ENCODE measurements at regions of chr12 and their contacts with region 1.

Region 1: GRCh38 chr12:48814262-48815125 is 3.8 kb upstream of the CACNB3 start:
- DNase-seq: no peak
- H3K4me3 ChIP-seq: peak overlapping the region; percentile 83
- CTCF ChIP-seq: peak; percentile 99

Region 2: DNA sequence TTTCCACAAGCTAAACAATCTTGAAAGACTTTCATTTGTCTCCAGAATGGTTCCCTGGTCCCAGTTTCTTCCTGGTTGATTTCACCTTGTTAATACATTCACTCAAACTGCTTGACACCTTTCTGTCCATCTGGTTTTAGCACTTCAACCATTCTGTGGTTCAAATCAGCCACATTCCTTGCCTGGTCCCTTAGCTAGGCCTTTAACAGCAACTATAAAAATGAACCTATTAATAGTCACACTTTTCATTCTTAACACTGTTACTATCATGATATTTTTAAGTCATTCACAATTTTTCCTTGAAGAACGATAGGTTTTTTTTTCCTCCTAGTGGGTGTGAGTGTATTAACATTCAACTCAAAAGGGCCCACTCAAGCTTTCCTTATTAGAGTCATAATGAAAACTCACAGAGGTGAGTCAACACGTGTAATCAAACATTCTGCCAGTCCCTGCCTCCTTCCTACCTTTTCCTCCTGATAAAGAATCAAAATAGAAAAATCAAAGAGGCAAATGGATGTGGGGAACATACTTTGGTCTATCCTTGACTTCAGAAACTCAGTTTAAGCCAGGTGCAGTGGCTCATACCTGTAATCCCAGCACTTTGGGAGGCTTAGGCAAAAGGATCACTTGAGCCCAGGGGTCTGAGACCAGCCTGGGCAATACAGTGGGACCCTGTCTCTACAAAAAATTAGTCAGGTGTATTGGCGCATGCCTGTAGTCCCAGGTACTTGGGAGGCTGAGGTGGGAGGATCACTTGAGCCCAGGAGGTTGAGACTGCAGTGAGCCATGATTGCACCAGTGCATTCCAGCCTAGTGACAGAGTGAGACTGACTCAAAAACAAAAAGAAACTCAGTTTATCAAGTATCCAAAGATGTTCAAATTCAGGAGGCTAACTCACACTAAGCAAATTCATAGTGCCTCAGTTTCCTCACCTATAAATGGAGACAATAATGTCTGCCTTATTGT is 63.4 kb before region 1 on chr12:
- CTCF ChIA-PET with region 1: interaction called, 95 read pairs
- POLR2A ChIA-PET with region 1: interaction called, 3 read pairs
- DNase-seq: no peak
- H3K4me3 ChIP-seq: no peak overlapping the region
- CTCF ChIP-seq: no peak

Region 3: GRCh38 chr12:48758221-48758620 is 56.3 kb before region 1 on chr12:
- CTCF ChIA-PET with region 1: interaction called, 95 read pairs
- POLR2A ChIA-PET with region 1: interaction called, 3 read pairs
- DNase-seq: no peak
- H3K4me3 ChIP-seq: no peak overlapping the region
- CTCF ChIP-seq: no peak

Region 4: GRCh38 chr12:48779869-48780268 is 34.6 kb before region 1 on chr12:
- CTCF ChIA-PET with region 1: interaction called, 24 read pairs
- POLR2A ChIA-PET with region 1: no interaction called
- DNase-seq: peak; percentile 45
- H3K4me3 ChIP-seq: no peak overlapping the region; the same call in 1 of the 2 replicates
- CTCF ChIP-seq: no peak

Region 5: GRCh38 chr12:48788854-48789796 is 25.4 kb before region 1 on chr12 and contains the start of gene ADCY6:
- CTCF ChIA-PET with region 1: interaction called, 147 read pairs
- POLR2A ChIA-PET with region 1: interaction called, 4 read pairs
- DNase-seq: no peak
- H3K4me3 ChIP-seq: peak within 1 kb of the TSS; percentile 80
- CTCF ChIP-seq: no peak

Region 6: GRCh38 chr12:48795480-48796455 is 18.7 kb before region 1 on chr12:
- CTCF ChIA-PET with region 1: interaction called, 147 read pairs
- POLR2A ChIA-PET with region 1: no interaction called
- DNase-seq: no peak
- H3K4me3 ChIP-seq: no peak overlapping the region
- CTCF ChIP-seq: peak; percentile 81

Region 7: DNA sequence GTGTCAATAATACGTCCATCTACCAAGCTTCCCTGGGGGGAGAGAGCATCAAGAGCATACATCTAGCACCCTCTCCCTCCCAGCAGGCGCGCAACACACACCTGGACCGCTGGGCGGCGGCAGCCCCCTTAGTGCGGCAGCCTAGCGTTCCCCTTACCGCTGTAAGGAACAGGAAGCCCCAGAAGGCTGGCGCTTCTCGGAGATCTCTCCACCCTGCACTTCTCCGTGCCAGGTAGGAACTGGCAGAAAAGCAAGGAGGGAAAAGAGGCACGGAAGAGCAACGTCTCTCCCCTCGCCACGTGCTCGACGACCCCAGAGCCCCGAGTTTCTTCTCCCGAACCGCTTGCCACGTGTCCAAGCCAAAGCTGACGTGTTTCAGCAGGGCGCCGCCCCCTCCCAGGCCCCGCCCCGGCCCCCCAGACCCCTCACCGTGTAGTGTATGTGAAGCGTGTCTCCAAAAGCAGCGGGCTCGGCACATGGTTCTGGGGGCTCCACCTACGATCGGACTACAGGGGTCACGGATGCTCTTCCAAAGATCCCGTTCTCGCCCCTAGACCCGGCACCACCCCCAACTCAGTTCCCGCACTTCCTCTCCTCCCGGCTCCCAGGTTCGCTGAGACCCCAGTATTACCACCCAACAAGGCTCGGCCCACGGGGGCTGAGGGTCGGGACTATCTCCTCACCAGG is 110.3 kb after region 1 on chr12:
- CTCF ChIA-PET with region 1: interaction called, 12 read pairs
- POLR2A ChIA-PET with region 1: no interaction called
- DNase-seq: no peak
- H3K4me3 ChIP-seq: peak overlapping the region; percentile 89
- CTCF ChIP-seq: peak; percentile 67